T-cell (primary cell): ENCODE measurements at regions of chr12 and their contacts with region 1.

Region 1: DNA sequence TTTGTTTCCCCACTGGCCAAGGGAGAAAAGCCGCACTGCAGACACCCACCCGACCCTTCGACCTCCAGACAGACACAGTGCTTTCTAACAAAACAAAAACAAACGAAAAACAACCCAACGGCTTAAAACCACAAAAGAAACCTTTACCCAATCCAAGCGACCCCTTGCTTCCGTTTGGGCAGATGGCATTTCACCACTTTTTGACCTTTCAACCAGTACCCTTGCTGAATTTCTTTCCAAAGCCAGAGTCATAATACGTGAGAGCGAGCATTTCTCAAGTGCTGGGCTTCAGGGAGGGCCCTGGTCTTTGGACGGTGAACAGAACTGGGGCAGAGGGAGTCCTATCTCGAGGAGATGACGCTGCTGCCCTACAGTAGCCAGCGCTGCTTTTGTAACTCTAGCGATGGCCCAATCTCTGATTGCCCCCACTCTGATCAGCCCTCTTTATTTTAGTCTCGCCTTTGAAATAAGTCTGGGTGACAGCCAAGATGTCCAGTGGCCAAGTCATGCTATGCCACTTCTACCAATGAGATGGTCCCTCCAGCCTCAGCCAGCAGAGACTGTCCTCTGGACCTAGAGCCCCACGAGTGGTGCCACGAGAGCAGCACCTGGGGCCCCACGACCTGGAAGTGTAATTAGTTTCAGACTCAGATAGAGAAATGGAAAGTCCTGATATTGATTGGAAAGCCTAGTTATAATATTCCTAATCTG is 21.9 kb upstream of the ADIPOR2 start:
- DNase-seq: no peak
- ATAC-seq: no peak
- H3K4me3 ChIP-seq: no peak overlapping the region
- H3K4me3 Mint-ChIP-seq: no peak overlapping the region
- H3K27ac ChIP-seq: no peak overlapping the region
- H3K27ac Mint-ChIP-seq: peak overlapping the region; percentile 65 to 79
- H3K4me1 ChIP-seq: peaks cover 17 to 37% of the 10 kb centered on the region in 2 experiments
- H3K4me1 Mint-ChIP-seq: peaks cover 45 to 47% (median 47%) of the 10 kb centered on the region in 3 donors
- H3K27me3 ChIP-seq: no peaks in the 10 kb centered on the region
- H3K27me3 Mint-ChIP-seq: no peaks in the 10 kb centered on the region

Region 2: DNA sequence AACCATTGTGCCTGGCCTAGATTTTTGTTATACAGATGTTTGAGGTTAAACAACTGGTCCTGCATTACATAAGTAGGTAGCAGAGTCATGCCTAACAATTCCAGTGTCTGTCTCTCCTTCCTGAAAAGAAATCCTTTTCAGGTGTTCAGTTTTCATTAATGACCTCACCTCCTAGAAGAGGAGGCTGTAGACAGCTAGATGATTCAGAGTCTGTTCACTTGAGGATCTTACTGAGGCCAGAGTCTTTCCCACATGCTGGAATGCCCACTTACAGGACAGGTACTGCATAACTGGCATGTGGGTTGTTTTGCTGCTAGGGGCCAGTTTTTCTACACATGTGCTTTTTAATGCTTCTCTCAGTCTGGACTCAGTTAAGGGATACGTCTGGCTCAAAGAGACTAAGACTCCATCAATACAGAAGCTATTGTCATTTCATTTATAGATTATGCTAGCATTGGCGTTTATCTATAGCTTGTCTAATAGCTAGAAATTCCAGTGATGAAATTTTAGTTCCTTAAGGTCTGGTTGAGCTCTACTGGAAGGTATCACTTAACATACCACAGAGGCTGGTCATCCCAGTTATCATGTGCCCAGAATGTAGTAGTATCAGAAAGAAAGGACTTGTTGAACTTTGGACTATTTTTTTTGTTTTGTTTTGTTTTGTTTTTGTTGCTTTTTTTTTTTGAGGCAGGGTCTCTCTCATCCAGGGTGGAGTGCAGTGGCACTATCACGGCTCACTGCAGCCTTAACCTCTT is 471.5 kb before region 1 on chr12:
- CTCF ChIA-PET with region 1: no interaction called
- POLR2A ChIA-PET with region 1: no interaction called
- DNase-seq: no peak
- ATAC-seq: no peak
- H3K4me3 ChIP-seq: no peak overlapping the region
- H3K4me3 Mint-ChIP-seq: no peak overlapping the region
- H3K27ac ChIP-seq: no peak overlapping the region
- H3K27ac Mint-ChIP-seq: no peak overlapping the region
- H3K4me1 ChIP-seq: peaks cover 0 to 8% of the 10 kb centered on the region in 2 experiments
- H3K4me1 Mint-ChIP-seq: peaks cover 9 to 15% (median 9%) of the 10 kb centered on the region in 3 donors
- H3K27me3 ChIP-seq: no peaks in the 10 kb centered on the region
- H3K27me3 Mint-ChIP-seq: no peaks in the 10 kb centered on the region

Region 3: GRCh38 chr12:1690578-1691122 is 21.7 kb after region 1 on chr12 and contains the start of gene ADIPOR2:
- CTCF ChIA-PET with region 1: interaction called, 4 to 13 read pairs
- POLR2A ChIA-PET with region 1: no interaction called
- DNase-seq: peak; percentile 85 to 98 (median 93)
- ATAC-seq: peak; percentile 98
- H3K4me3 ChIP-seq: peak within 1 kb of the TSS; percentile 94 to 96
- H3K4me3 Mint-ChIP-seq: peak within 1 kb of the TSS; percentile 92 to 94 (median 92)
- H3K27ac ChIP-seq: peak within 1 kb of the TSS; percentile 91
- H3K27ac Mint-ChIP-seq: peak within 1 kb of the TSS; percentile 96 to 99
- H3K4me1 ChIP-seq: peaks cover 10 to 19% of the 10 kb centered on the region in 2 experiments
- H3K4me1 Mint-ChIP-seq: peaks cover 36 to 45% (median 42%) of the 10 kb centered on the region in 3 donors
- H3K27me3 ChIP-seq: no peaks in the 10 kb centered on the region
- H3K27me3 Mint-ChIP-seq: no peaks in the 10 kb centered on the region
- total RNA-seq, gene ADIPOR2: 21.7 to 35.0 (median 33.4) TPM